ENCODE measurements at regions of chr17 and their contacts with region 1.

Region 1: GRCh38 chr17:43576563-43577229 is 30.6 kb upstream of the ETV4 start:
- DNase-seq: peak; percentile 69
- H3K4me3 ChIP-seq: no peak overlapping the region
- H3K27ac ChIP-seq: no peak overlapping the region
- H3K4me1 ChIP-seq: peaks cover 23% of the 10 kb centered on the region
- H3K27me3 ChIP-seq: no peaks in the 10 kb centered on the region

Region 2: GRCh38 chr17:43418441-43419374 is 158.0 kb before region 1 on chr17:
- in situ Hi-C with region 1: no loop called
- DNase-seq: peak; percentile 97
- H3K4me3 ChIP-seq: peak overlapping the region; percentile 63
- H3K27ac ChIP-seq: peak overlapping the region; percentile 91
- H3K4me1 ChIP-seq: peaks cover 32% of the 10 kb centered on the region
- H3K27me3 ChIP-seq: no peaks in the 10 kb centered on the region

Region 3: GRCh38 chr17:43673516-43674323 is 97.0 kb after region 1 on chr17:
- in situ Hi-C with region 1: loop called (anchors 5 kb)
- DNase-seq: peak; percentile 75
- H3K4me3 ChIP-seq: no peak overlapping the region
- H3K27ac ChIP-seq: no peak overlapping the region
- H3K4me1 ChIP-seq: peaks cover 9% of the 10 kb centered on the region
- H3K27me3 ChIP-seq: no peaks in the 10 kb centered on the region

Region 4: DNA sequence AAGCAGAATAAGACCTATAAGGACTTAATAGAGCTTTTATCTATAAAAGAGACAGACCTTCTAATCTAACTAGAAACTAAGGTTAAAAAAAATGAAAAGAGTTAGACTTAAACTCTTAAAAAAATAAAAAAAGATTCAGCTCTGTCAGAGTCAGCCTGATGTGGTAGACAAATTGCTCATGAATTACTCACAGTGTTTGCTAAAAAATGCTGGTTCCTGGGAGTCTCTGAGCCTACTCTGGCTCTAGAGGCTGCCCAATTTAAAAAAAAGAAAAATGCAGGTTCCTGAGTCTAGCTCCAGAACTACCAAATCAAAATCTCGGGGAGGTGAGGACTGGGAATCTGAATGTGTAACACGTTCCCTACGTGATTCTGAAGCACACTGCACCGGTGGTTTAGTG is 163.8 kb after region 1 on chr17:
- in situ Hi-C with region 1: loop called (anchors 10 kb)
- DNase-seq: peak; percentile 85
- H3K4me3 ChIP-seq: no peak overlapping the region
- H3K27ac ChIP-seq: no peak overlapping the region; the same call in 1 of the 2 replicates
- H3K4me1 ChIP-seq: peaks cover 41% of the 10 kb centered on the region
- H3K27me3 ChIP-seq: no peaks in the 10 kb centered on the region

Measured in GM23248 (cell line).